SK-N-SH (cell line): ENCODE measurements at regions of chr11 and their contacts with region 1.

Region 1: DNA sequence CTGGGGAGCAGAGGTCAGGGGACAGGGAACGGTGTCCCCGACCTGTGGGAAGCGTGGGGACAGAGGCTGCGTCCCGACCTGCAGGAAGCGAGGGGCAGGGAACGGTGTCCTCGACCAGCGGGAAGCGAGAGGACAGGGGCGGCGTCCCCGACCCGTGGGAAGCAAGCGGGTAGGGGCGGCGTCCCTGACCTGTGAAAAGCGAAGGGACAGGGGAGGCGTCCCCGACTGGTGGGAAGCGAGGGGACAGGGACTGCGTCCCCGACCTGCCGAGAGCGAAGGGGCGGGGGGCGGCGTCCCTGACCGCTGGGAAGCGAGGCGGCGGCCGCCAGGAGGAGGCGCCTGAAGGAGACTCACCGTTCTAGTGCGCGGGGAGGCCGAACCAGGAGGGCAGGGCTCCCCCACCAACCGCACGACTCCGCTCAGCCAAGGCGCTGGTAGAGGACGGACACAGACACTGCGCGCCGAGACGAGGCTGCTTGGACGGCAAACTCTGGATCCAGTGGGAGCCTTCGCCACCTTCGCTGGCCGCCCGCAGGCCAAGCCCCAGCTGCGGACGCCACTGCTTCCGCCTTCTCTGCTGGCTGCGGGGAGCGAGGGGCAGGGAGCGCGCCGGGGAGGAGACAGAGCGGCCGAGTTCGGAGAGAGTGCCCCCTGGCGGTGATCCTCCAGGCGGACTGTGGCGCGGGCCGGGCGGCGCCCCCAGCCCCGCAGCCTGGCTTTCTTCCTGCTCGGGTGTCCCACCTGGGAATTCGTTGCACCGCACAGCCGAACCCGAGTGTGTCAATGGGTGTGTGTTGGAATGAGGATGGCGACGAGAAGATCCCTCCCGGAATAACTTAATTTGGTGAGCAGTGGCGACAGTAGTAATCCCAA is at the start of gene TRAF6:
- DNase-seq: peak; percentile 95
- H3K4me3 ChIP-seq: peak within 1 kb of the TSS; percentile 95 to 97
- H3K27ac ChIP-seq: peak within 1 kb of the TSS; percentile 86 to 94
- H3K4me1 ChIP-seq: peaks cover 3 to 11% of the 10 kb centered on the region in 2 experiments
- H3K27me3 ChIP-seq: no peaks in the 10 kb centered on the region
- CTCF ChIP-seq: peak; percentile 88
- EP300 ChIP-seq: no peak
- RAD21 ChIP-seq: peak; percentile 22
- polyA plus RNA-seq, gene TRAF6: 4.3 and 5.1 TPM in 2 replicates

Region 2: GRCh38 chr11:35962369-35963138 is 547.4 kb before region 1 on chr11:
- CTCF ChIA-PET with region 1: no interaction called
- POLR2A ChIA-PET with region 1: no interaction called
- DNase-seq: no peak
- H3K4me3 ChIP-seq: no peak overlapping the region
- H3K27ac ChIP-seq: no peak overlapping the region
- H3K4me1 ChIP-seq: peaks cover 0 to 21% of the 10 kb centered on the region in 2 experiments; a peak in 2 of 4 replicates
- H3K27me3 ChIP-seq: no peaks in the 10 kb centered on the region
- CTCF ChIP-seq: no peak
- EP300 ChIP-seq: no peak
- RAD21 ChIP-seq: no peak

Region 3: DNA sequence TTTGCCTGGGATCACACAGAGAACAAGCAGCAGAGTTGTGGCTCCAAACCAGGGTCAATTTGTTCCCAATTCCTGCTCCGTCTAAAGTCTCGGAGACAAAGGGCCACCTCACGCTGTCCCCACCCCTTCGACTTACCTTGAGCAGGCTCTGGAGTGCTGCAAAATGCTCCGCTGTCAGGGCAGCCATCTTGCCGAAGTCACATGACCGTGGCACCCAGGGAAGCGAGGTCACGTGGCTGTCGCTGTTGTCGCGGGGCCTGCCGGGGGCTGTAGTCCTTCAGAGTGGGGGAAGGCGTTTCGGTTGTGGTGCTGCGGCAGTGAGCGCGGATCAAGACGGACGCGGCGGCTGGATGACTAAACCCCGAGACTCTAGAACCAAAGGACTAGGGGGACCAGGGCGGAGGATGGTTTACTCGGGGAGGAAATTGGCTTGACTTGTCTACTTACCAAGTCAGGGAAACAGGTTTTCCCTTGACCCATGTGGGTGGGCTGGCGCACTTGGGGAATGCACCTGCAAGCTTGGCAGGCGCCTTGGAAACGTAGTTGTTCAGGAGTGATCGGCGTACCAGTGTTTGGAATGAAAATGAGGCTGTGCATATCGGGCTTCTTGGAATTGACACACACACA is 220.6 kb before region 1 on chr11 and contains the start of gene COMMD9:
- CTCF ChIA-PET with region 1: interaction called, 15 read pairs
- POLR2A ChIA-PET with region 1: interaction called, 3 read pairs
- DNase-seq: peak; percentile 92
- H3K4me3 ChIP-seq: peak within 1 kb of the TSS; percentile 66 to 89
- H3K27ac ChIP-seq: peak within 1 kb of the TSS in 1 of 2 experiments; percentile 32; a peak in 1 of 4 replicates
- H3K4me1 ChIP-seq: peaks cover 3 to 13% of the 10 kb centered on the region in 2 experiments; a peak in 3 of 4 replicates
- H3K27me3 ChIP-seq: no peaks in the 10 kb centered on the region
- CTCF ChIP-seq: no peak
- EP300 ChIP-seq: no peak
- RAD21 ChIP-seq: no peak
- polyA plus RNA-seq, gene COMMD9: 44.2 and 48.2 TPM in 2 replicates

Region 4: DNA sequence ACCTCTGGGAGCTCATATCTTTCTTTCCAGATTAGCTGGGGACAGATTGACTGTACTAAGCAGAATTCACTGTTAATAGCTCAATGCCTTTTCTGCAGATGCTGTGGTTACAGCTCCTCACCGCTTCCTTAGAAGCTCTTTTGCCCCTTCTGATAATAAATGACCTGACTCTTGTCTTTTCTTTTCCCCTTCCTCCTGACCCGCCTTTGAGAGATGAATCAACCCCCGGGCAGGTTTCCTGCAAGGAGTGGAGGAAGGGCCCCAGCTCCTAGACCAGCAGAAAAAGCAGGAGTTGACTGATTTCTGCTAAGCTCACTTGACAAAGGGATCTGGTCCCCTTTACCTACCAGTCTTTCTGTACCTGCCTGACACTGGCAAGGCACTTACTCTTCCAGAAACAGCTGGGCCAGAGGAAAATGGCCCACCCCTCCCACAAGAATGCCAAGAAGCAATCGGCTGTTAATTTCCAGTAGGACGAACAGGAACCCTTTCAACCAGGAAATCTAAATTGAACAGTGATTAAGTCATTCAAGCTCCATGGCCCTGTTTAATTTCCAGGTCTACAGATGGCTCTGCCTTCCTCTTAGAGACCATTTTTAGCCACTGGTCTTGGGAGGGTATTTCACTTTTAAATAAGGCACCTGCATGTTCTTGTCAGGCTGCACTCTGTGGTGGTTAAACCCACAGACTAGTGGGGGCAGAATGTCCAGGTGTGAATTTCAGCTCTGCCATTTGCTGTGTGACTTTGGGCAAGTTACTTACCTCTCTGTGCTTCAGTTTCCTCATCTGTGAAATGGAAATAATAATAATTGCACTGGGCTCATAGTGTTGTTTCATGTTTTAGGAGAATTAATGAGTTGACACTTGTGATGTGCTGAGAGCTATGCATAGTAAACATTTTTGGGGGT is 146.3 kb before region 1 on chr11:
- CTCF ChIA-PET with region 1: no interaction called
- POLR2A ChIA-PET with region 1: no interaction called
- DNase-seq: no peak
- H3K4me3 ChIP-seq: no peak overlapping the region
- H3K27ac ChIP-seq: no peak overlapping the region
- H3K4me1 ChIP-seq: peaks cover 0 to 19% of the 10 kb centered on the region in 2 experiments; a peak in 1 of 4 replicates
- H3K27me3 ChIP-seq: no peaks in the 10 kb centered on the region
- CTCF ChIP-seq: no peak
- EP300 ChIP-seq: no peak
- RAD21 ChIP-seq: no peak

Region 5: DNA sequence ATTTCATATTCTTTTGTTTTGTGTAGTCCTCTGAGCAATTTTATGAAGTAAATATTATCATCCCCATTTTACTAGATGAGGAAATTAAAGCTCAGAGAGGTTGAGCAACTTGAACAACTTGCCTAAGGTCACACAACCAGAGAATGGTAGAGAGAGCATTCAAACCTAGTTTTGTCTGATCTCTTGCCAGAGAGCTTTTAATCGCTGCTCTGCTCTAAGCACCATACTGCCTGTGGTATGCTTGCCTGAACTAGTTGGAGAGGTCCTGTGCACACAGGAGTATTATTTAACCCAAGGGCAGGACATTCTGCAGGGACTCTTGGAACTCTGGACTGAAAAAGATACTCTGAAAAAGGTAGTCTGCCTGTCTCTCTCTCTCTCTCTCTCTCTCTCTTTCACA is 38.4 kb before region 1 on chr11:
- CTCF ChIA-PET with region 1: no interaction called
- POLR2A ChIA-PET with region 1: no interaction called
- DNase-seq: no peak
- H3K4me3 ChIP-seq: no peak overlapping the region
- H3K27ac ChIP-seq: no peak overlapping the region
- H3K4me1 ChIP-seq: peaks cover 0 to 6% of the 10 kb centered on the region in 2 experiments; a peak in 2 of 4 replicates
- H3K27me3 ChIP-seq: no peaks in the 10 kb centered on the region
- CTCF ChIP-seq: no peak
- EP300 ChIP-seq: no peak
- RAD21 ChIP-seq: no peak

Region 6: DNA sequence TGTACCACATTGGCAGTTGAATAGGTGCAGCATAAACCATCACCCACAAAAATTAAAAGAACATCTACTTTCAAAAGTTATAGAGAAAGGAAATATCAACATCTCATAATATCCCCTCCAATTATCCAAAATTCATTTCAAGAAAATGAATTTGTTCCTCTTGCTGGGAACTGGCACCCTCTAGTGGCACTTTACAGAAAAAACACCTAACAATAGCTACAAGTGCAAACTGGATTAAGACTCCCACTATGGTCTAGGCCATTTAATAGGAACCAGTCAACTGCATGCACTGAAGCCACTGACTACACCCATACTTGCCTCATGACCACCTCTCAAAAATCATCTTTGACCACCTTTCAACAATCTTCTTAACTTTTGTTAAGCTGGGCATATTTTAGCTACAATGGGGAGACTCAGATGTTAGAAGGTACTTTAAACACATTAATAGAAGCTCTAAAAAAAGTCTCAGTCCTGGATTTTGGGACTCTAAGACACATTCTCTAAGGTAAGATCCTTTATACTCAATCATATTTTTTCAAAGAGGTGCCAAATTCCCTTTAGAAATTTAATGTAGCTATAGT is 17.1 kb before region 1 on chr11:
- CTCF ChIA-PET with region 1: interaction called, 56 read pairs
- POLR2A ChIA-PET with region 1: no interaction called
- DNase-seq: peak; percentile 46
- H3K4me3 ChIP-seq: no peak overlapping the region
- H3K27ac ChIP-seq: no peak overlapping the region
- H3K4me1 ChIP-seq: peaks cover 5 to 11% of the 10 kb centered on the region in 2 experiments; a peak in 3 of 4 replicates
- H3K27me3 ChIP-seq: no peaks in the 10 kb centered on the region
- CTCF ChIP-seq: peak; percentile 89
- EP300 ChIP-seq: no peak
- RAD21 ChIP-seq: peak; percentile 80

Region 7: DNA sequence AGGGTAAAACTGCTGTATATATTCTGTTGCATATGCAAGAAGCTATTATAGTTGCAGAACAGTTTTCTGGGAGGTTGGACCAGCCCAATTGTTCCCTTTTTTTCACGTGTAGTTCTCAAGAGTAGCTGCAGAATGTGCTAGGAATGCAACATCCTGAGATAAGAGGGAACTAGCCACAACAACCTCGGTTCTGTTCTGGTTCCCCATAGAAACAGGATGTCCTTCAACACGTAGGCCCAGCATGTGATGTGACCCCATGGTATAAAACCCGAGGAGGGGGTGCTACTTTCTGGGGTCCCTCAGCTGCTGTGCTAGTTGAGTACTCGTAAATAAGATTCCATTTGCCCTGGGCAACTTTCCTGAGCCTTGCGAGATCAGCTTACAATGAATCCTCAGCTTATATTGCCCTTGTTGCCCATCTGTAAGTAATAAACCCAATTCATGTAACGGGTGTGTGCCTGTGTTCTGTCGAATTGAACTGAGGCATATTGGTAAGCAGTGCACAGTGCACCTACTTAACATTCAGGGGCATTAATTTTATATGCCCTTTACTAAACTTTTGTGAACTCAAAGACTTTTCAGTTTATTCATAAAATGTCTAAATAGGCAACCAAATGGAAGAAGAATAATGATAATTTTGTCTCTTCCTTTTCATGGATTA is 23.1 kb after region 1 on chr11:
- CTCF ChIA-PET with region 1: interaction called, 18 read pairs
- POLR2A ChIA-PET with region 1: no interaction called
- DNase-seq: peak; percentile 51
- H3K4me3 ChIP-seq: no peak overlapping the region; a peak in 1 of 4 replicates
- H3K27ac ChIP-seq: peak overlapping the region in 1 of 2 experiments; percentile 91; a peak in 2 of 4 replicates
- H3K4me1 ChIP-seq: peaks cover 0 to 13% of the 10 kb centered on the region in 2 experiments; a peak in 2 of 4 replicates
- H3K27me3 ChIP-seq: no peaks in the 10 kb centered on the region
- CTCF ChIP-seq: no peak
- EP300 ChIP-seq: peak in 1 of 2 experiments; percentile 62; a peak in 1 of 4 replicates
- RAD21 ChIP-seq: no peak

Region 8: DNA sequence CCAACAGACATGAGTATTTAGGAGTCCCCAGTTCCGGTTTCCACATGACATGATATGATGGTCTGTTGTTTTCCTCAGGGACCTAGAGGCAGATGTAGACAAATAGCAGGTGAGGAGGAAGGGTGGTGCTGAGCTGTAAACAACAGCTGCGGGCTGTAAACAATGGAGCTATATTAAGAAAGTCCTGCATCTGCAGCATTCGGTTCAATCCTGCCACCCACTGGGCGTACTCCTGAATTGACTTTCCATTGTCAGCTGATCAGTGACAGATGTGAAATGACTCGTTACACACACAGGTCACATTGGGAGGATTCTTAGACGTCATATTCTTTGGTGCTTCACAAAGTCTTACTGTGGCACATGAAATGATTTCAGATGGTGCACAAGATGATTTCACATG is 31.1 kb after region 1 on chr11:
- CTCF ChIA-PET with region 1: interaction called, 10 read pairs
- POLR2A ChIA-PET with region 1: interaction called, 3 read pairs
- DNase-seq: peak; percentile 37
- H3K4me3 ChIP-seq: no peak overlapping the region
- H3K27ac ChIP-seq: no peak overlapping the region
- H3K4me1 ChIP-seq: peaks cover 0 to 8% of the 10 kb centered on the region in 2 experiments; a peak in 2 of 4 replicates
- H3K27me3 ChIP-seq: no peaks in the 10 kb centered on the region; the same call in none of the 2 replicates
- CTCF ChIP-seq: peak; percentile 43
- EP300 ChIP-seq: no peak
- RAD21 ChIP-seq: peak; percentile 70

Region 9: GRCh38 chr11:36684840-36685801 is 175.2 kb after region 1 on chr11:
- CTCF ChIA-PET with region 1: no interaction called
- POLR2A ChIA-PET with region 1: no interaction called
- DNase-seq: no peak
- H3K4me3 ChIP-seq: no peak overlapping the region
- H3K27ac ChIP-seq: no peak overlapping the region
- H3K4me1 ChIP-seq: no peaks in the 10 kb centered on the region; a peak in 1 of 4 replicates
- H3K27me3 ChIP-seq: no peaks in the 10 kb centered on the region; the same call in 1 of the 2 replicates
- CTCF ChIP-seq: no peak
- EP300 ChIP-seq: no peak
- RAD21 ChIP-seq: no peak